Transverse colon (tissue), 4 donors: ENCODE measurements at regions of chr4 and their contacts with region 1.

Region 1: GRCh38 chr4:119041951-119042560 is 93.6 kb upstream of the MYOZ2 start:
- DNase-seq: peak; percentile 76
- H3K4me3 ChIP-seq: no peak overlapping the region
- H3K27ac ChIP-seq: peak overlapping the region; percentile 85 to 91 (median 88)
- H3K4me1 ChIP-seq: peaks cover 4 to 56% (median 18%) of the 10 kb centered on the region in 4 donors
- H3K27me3 ChIP-seq: no peaks in the 10 kb centered on the region
- CTCF ChIP-seq: peak; percentile 59 to 81 (median 69)
- EP300 ChIP-seq: no peak
- POLR2A ChIP-seq: no peak

Region 2: GRCh38 chr4:118888666-118889311 is 153.3 kb before region 1 on chr4 and contains the start of gene SYNPO2:
- in situ Hi-C with region 1: no loop called
- intact Hi-C with region 1: no loop called
- DNase-seq: peak; percentile 72
- H3K4me3 ChIP-seq: peak within 1 kb of the TSS; percentile 36 to 60 (median 38)
- H3K27ac ChIP-seq: peak within 1 kb of the TSS; percentile 74 to 87 (median 81)
- H3K4me1 ChIP-seq: peaks cover 0 to 11% (median 2%) of the 10 kb centered on the region in 4 donors
- H3K27me3 ChIP-seq: peaks cover 26% of the 10 kb centered on the region
- CTCF ChIP-seq: no peak
- EP300 ChIP-seq: no peak
- POLR2A ChIP-seq: peak; percentile 79
- total RNA-seq, gene SYNPO2: 99.7 to 400 (median 145) TPM

Region 3: DNA sequence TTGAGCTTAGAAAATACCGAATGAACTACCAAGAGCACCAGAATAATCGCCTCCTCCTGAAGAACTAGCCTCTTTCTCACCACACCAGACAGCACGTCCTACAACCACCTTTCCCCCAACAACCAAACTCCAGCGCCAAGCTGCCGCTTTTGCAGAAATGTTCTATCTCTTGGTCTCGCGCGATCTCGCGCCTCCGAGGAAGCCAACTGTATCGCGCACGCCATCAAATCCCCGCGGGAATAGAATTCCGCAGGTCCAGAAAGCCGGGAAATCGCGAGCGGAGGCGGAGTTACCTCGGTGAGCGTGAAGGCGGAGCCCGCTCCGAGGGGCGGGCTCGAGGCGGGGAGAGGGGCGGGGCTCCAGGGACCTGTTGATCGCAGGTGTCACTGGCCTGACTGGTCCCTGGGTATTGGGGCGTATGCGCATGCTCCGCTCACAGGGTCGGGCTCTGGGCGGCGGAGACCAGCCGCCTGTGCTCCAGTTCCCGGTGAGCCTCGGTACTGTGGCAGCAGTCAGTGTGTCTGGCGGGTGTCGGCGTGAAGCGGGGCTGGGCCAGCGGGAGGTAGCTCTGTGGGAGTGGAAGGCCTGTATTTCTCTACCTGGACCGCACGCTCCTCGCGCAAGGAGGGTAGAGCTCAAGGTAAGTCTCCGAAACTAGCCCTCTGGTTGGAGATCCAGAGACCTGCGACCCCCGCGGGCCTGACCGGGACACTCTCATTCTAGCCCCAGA is 170.3 kb after region 1 on chr4 and contains the start of gene USP53:
- in situ Hi-C with region 1: no loop called
- intact Hi-C with region 1: loop called (anchors 1 kb)
- DNase-seq: peak; percentile 99
- H3K4me3 ChIP-seq: peak within 1 kb of the TSS; percentile 57 to 81 (median 72)
- H3K27ac ChIP-seq: peak within 1 kb of the TSS; percentile 95 to 97 (median 96)
- H3K4me1 ChIP-seq: peaks cover 0 to 41% (median 14%) of the 10 kb centered on the region in 4 donors
- H3K27me3 ChIP-seq: no peaks in the 10 kb centered on the region
- CTCF ChIP-seq: peak in 1 of 5 experiments; percentile 27
- EP300 ChIP-seq: no peak
- POLR2A ChIP-seq: peak; percentile 99
- total RNA-seq, gene USP53: 71.4 to 165 (median 98.5) TPM

Region 4: GRCh38 chr4:119238068-119238722 is 196.1 kb after region 1 on chr4:
- in situ Hi-C with region 1: loop called in 2 of 4 experiments (anchors 25 kb)
- intact Hi-C with region 1: no loop called
- DNase-seq: no peak
- H3K4me3 ChIP-seq: no peak overlapping the region
- H3K27ac ChIP-seq: peak overlapping the region in 3 of 4 donors; percentile 0 to 29 (median 26)
- H3K4me1 ChIP-seq: peaks cover 0 to 28% (median 5%) of the 10 kb centered on the region in 4 donors
- H3K27me3 ChIP-seq: no peaks in the 10 kb centered on the region
- CTCF ChIP-seq: no peak
- EP300 ChIP-seq: no peak
- POLR2A ChIP-seq: no peak

Region 5: DNA sequence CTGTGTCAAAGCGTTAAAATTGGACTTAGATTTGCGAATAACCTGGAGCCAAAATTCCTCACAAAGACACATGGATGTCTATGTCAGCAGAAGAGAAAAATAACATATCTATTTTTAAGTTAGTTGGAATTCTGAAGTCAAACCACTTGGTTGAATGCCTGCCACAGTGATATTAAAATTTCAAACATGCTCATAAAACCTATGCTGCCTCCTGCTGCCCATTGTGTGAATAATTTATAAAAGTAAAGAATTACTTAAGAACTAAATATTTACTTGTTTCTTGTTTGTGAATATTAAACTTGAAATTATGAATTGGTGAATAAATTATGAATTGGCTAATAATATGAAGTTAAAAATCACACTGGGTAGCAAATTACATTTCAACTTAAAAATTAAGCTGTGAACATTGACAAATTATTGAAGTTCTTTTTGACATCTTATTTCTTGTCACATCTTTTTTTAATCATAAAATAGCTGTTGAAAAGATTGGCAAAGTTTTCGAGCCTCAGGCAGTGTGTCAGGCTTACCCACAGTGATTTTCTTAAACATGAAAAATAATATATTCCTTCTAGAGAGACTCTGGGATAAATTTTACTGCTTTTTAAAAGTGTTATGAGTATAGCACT is 244.4 kb after region 1 on chr4:
- in situ Hi-C with region 1: loop called in 1 of 4 experiments (anchors 5 kb)
- intact Hi-C with region 1: loop called (anchors 10 kb)
- DNase-seq: no peak
- H3K4me3 ChIP-seq: no peak overlapping the region
- H3K27ac ChIP-seq: peak overlapping the region in 1 of 4 donors; percentile 49
- H3K4me1 ChIP-seq: peaks cover 0 to 28% (median 16%) of the 10 kb centered on the region in 4 donors
- H3K27me3 ChIP-seq: no peaks in the 10 kb centered on the region
- CTCF ChIP-seq: peak; percentile 48 to 76 (median 56)
- EP300 ChIP-seq: no peak
- POLR2A ChIP-seq: no peak

Region 6: DNA sequence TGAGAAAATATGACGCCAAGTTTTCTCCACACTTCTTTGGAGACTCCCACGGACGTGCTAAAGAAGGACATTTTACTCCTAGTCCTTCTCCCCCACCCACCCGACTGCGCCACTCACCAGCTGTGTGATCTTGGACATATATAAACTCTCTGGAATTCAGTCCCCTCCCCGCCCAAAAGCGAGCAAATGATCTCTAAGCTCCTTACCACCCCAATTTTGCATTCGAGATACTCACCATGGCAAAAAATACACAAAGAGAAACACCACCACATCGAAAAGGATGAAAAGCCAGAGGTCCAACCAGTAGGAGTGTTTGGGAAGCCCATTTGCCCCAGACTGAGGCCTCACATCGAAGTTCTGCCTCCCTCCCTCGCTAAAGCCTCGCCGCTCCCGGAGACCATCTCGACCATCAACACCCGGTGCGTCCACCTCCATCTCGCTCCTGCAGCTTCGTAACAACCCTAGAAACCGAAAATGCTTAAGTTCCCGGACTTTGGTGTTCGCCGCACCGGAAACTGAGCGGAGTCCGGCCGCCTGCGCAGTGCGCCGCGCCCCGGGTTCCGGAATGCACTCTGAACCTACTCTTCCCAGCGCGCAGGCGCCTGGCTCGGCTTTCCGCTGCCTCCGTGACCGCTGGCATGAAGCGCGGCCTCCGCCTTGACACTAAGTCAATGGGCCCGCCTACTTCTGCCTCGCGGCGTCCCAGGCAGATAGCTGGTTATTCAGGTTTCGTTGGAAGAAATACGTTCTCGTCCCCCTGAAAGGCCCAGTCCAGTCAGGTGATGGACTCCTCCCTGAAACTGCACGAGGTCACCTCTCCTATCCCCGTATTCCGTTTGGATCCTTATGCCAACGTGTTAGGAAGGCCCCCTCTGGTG is 258.3 kb after region 1 on chr4:
- in situ Hi-C with region 1: loop called in 1 of 4 experiments (anchors 10 kb)
- intact Hi-C with region 1: no loop called
- DNase-seq: peak; percentile 97
- H3K4me3 ChIP-seq: peak overlapping the region; percentile 39 to 85 (median 62)
- H3K27ac ChIP-seq: peak overlapping the region; percentile 94 to 97 (median 94)
- H3K4me1 ChIP-seq: peaks cover 6 to 30% (median 27%) of the 10 kb centered on the region in 4 donors
- H3K27me3 ChIP-seq: no peaks in the 10 kb centered on the region
- CTCF ChIP-seq: peak in 2 of 5 experiments; percentile 9 to 40
- EP300 ChIP-seq: peak; percentile 7
- POLR2A ChIP-seq: peak; percentile 91